Endothelial cell of umbilical vein (primary cell): ENCODE measurements at regions of chr1 and their contacts with region 1.

Region 1: GRCh38 chr1:196372896-196373536 is 235.2 kb downstream of the KCNT2 start:
- DNase-seq: peak; percentile 54
- H3K4me3 ChIP-seq: no peak overlapping the region
- H3K27ac ChIP-seq: no peak overlapping the region
- H3K4me1 ChIP-seq: no peaks in the 10 kb centered on the region
- H3K27me3 ChIP-seq: no peaks in the 10 kb centered on the region
- CTCF ChIP-seq: peak; percentile 18 to 22
- POLR2A ChIP-seq: no peak

Region 2: GRCh38 chr1:196393742-196394141 is 20.7 kb after region 1 on chr1:
- CTCF ChIA-PET with region 1: interaction called, 11 read pairs
- POLR2A ChIA-PET with region 1: no interaction called
- dilution Hi-C with region 1: no loop called
- intact Hi-C with region 1: no loop called
- DNase-seq: peak; percentile 82
- H3K4me3 ChIP-seq: no peak overlapping the region
- H3K27ac ChIP-seq: no peak overlapping the region
- H3K4me1 ChIP-seq: peaks cover 7% of the 10 kb centered on the region
- H3K27me3 ChIP-seq: no peaks in the 10 kb centered on the region
- CTCF ChIP-seq: no peak
- POLR2A ChIP-seq: no peak

Region 3: GRCh38 chr1:196415978-196416377 is 43.0 kb after region 1 on chr1:
- CTCF ChIA-PET with region 1: no interaction called
- POLR2A ChIA-PET with region 1: no interaction called
- dilution Hi-C with region 1: no loop called
- intact Hi-C with region 1: no loop called
- DNase-seq: no peak
- H3K4me3 ChIP-seq: no peak overlapping the region
- H3K27ac ChIP-seq: no peak overlapping the region
- H3K4me1 ChIP-seq: no peaks in the 10 kb centered on the region
- H3K27me3 ChIP-seq: no peaks in the 10 kb centered on the region
- CTCF ChIP-seq: no peak
- POLR2A ChIP-seq: no peak

Region 4: GRCh38 chr1:196732526-196732925 is 359.5 kb after region 1 on chr1:
- CTCF ChIA-PET with region 1: no interaction called
- POLR2A ChIA-PET with region 1: no interaction called
- dilution Hi-C with region 1: no loop called
- intact Hi-C with region 1: no loop called
- DNase-seq: no peak
- H3K4me3 ChIP-seq: no peak overlapping the region
- H3K27ac ChIP-seq: no peak overlapping the region
- H3K4me1 ChIP-seq: no peaks in the 10 kb centered on the region
- H3K27me3 ChIP-seq: no peaks in the 10 kb centered on the region
- CTCF ChIP-seq: no peak
- POLR2A ChIP-seq: no peak